BJ (cell line): ENCODE measurements at regions of chr7 and their contacts with region 1.

Region 1: GRCh38 chr7:157273208-157274093 is 63.4 kb upstream of the DNAJB6 start:
- DNase-seq: no peak
- H3K4me3 ChIP-seq: no peak overlapping the region
- H3K27me3 ChIP-seq: no peaks in the 10 kb centered on the region
- CTCF ChIP-seq: peak; percentile 99

Region 2: DNA sequence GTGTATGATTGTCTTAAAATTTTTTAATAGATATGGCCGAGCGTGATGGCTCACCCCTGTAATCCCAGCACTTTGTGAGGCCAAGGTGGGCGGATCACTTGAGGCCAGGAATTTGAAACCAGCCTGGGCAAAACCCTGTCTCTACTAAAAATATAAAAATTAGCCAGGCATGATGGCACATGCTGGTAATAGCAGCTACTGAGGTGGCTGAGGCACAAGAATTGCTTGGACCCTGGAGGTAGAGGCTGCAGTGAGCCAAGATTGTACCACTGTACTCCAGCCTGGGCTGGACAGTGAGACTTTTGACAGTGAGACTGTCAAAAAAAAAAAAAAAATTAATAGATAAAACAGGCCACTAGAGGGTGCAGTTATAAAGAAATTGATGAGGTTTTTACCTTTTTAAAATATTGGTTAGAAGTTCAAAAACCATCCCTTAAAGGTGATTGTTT is 303.5 kb before region 1 on chr7:
- CTCF ChIA-PET with region 1: interaction called, 15 read pairs
- POLR2A ChIA-PET with region 1: no interaction called
- DNase-seq: no peak
- H3K4me3 ChIP-seq: no peak overlapping the region
- H3K27me3 ChIP-seq: no peaks in the 10 kb centered on the region
- CTCF ChIP-seq: peak; percentile 25

Region 3: DNA sequence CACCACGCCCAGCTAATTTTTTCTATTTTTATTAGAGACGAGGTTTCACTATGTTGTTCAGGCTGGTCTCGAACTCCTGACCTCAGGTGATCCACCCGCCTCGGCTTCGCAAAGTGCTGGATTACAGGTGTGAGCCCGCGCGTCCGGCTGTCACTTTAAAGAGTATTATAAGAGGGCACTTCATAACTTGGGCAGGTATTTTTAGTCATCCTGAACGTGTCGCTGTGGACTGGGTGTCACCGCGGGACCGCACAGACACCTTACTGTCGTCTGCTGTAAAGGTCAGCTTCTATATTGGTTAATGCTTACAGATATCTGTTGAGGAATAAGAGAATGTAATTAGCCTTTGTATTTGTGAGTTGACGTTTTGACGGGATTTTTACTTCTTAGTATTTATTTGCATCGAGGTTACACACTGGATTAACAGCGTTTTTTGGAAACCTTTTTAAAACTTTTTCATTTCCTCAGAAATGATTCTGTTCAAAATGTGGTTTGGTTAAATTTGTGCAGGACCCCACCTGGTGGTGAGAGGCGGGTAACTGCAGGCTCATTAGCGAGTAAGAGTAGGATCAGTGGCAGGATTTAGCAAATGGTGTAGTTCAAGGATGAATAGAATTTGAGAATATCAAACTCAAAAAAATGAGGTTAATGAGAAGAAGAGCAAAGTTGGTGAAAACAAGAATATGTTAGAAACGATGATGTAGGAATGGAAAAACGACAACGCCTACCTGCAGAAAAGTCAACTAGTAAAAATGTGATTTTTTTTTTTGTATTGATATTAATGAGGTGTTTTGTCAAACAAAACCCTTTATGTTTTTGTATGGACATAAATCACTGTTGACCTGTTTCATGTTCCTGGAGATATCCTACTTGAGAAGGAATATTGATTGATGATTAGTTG is 66.6 kb after region 1 on chr7:
- CTCF ChIA-PET with region 1: interaction called, 20 read pairs
- POLR2A ChIA-PET with region 1: interaction called, 4 read pairs
- DNase-seq: no peak
- H3K4me3 ChIP-seq: no peak overlapping the region
- H3K27me3 ChIP-seq: no peaks in the 10 kb centered on the region
- CTCF ChIP-seq: peak; percentile 90

Region 4: DNA sequence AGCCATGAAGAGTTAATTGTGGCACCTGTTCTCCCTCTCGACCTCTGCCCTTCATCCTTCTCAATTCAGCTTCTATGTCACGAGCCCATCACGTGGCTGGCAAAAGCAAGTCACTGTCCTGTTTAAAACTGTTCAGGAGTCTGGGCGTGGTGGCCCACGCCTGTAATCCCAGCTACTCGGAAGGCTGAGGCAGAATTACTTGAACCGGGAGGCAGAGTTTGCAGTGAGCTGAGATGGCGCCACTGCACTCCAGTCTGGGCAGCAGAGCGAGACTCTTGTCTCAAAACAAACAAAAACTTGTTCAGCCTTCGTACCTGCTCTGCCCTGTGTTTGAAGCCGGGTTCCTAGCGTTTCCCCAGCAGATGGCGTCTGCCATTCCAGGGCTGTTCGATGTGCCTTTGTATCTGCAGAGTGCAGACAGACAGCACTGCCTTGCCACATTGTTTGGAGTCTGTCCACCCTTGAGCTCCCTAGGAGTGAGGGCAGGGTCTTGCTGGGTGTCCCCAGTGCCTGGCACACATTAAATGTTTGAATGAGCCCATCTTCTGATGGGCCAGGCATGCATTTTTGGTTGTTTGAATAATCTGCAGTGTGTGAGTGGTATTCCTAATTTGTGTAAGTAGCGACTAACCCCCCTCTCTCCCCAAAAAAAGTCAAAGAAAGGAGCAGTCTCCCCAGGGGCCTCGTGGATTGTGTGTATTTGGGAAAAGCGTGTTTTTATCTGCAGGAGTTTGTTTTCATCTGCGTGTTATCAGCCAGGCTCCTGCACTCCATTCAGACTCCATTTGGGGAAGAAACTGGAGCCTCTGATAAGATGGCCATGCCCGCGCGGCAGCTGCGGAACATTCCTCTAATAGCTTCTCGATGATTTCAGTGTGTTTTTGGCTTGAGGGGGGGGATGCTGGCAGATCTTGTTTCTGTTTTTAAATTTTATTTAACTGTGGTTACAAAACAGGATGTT is 124.6 kb after region 1 on chr7:
- CTCF ChIA-PET with region 1: no interaction called
- POLR2A ChIA-PET with region 1: interaction called, 11 read pairs
- DNase-seq: peak; percentile 78
- H3K4me3 ChIP-seq: no peak overlapping the region
- H3K27me3 ChIP-seq: no peaks in the 10 kb centered on the region
- CTCF ChIP-seq: peak; percentile 72

Region 5: GRCh38 chr7:157793087-157793353 is 519.6 kb after region 1 on chr7:
- CTCF ChIA-PET with region 1: no interaction called
- POLR2A ChIA-PET with region 1: no interaction called
- DNase-seq: no peak
- H3K4me3 ChIP-seq: no peak overlapping the region
- H3K27me3 ChIP-seq: no peaks in the 10 kb centered on the region
- CTCF ChIP-seq: no peak